Panc1 (cell line): ENCODE measurements at regions of chr1 and their contacts with region 1.

Region 1: GRCh38 chr1:20212685-20213331 is 26.5 kb upstream of the PLA2G2C start:
- DNase-seq: no peak
- ATAC-seq: peak; percentile 91
- H3K4me3 ChIP-seq: peak overlapping the region in 1 of 2 experiments; percentile 29; a peak in 2 of 4 replicates
- H3K27ac ChIP-seq: no peak overlapping the region
- H3K4me1 ChIP-seq: peaks cover 6% of the 10 kb centered on the region; the same call in 1 of the 2 replicates
- H3K27me3 ChIP-seq: peaks cover 18% of the 10 kb centered on the region
- CTCF ChIP-seq: peak; percentile 94

Region 2: GRCh38 chr1:19918057-19918456 is 294.8 kb before region 1 on chr1:
- CTCF ChIA-PET with region 1: no interaction called
- POLR2A ChIA-PET with region 1: interaction called, 14 read pairs
- in situ Hi-C with region 1: no loop called
- intact Hi-C with region 1: no loop called
- DNase-seq: peak; percentile 64
- ATAC-seq: peak; percentile 84
- H3K4me3 ChIP-seq: no peak overlapping the region
- H3K27ac ChIP-seq: no peak overlapping the region
- H3K4me1 ChIP-seq: no peaks in the 10 kb centered on the region
- H3K27me3 ChIP-seq: no peaks in the 10 kb centered on the region
- CTCF ChIP-seq: peak; percentile 91

Region 3: GRCh38 chr1:19957779-19958178 is 255.0 kb before region 1 on chr1:
- CTCF ChIA-PET with region 1: interaction called, 10 read pairs
- POLR2A ChIA-PET with region 1: no interaction called
- in situ Hi-C with region 1: no loop called
- intact Hi-C with region 1: no loop called
- DNase-seq: no peak
- ATAC-seq: no peak
- H3K4me3 ChIP-seq: no peak overlapping the region
- H3K27ac ChIP-seq: no peak overlapping the region
- H3K4me1 ChIP-seq: no peaks in the 10 kb centered on the region
- H3K27me3 ChIP-seq: peaks cover 4% of the 10 kb centered on the region
- CTCF ChIP-seq: no peak; the same call in 1 of the 2 replicates

Region 4: GRCh38 chr1:20227704-20228103 is 14.9 kb after region 1 on chr1:
- CTCF ChIA-PET with region 1: interaction called, 15 read pairs
- POLR2A ChIA-PET with region 1: interaction called, 3 read pairs
- in situ Hi-C with region 1: no loop called
- intact Hi-C with region 1: no loop called
- DNase-seq: no peak
- ATAC-seq: no peak
- H3K4me3 ChIP-seq: no peak overlapping the region
- H3K27ac ChIP-seq: no peak overlapping the region
- H3K4me1 ChIP-seq: no peaks in the 10 kb centered on the region
- H3K27me3 ChIP-seq: peaks cover 31% of the 10 kb centered on the region
- CTCF ChIP-seq: no peak

Region 5: GRCh38 chr1:20318971-20319370 is 106.2 kb after region 1 on chr1:
- CTCF ChIA-PET with region 1: no interaction called
- POLR2A ChIA-PET with region 1: no interaction called
- in situ Hi-C with region 1: no loop called
- intact Hi-C with region 1: no loop called
- DNase-seq: no peak
- ATAC-seq: no peak
- H3K4me3 ChIP-seq: no peak overlapping the region
- H3K27ac ChIP-seq: no peak overlapping the region
- H3K4me1 ChIP-seq: no peaks in the 10 kb centered on the region
- H3K27me3 ChIP-seq: peaks cover 8% of the 10 kb centered on the region
- CTCF ChIP-seq: no peak

Region 6: GRCh38 chr1:20376880-20377494 is 164.2 kb after region 1 on chr1:
- CTCF ChIA-PET with region 1: no interaction called
- POLR2A ChIA-PET with region 1: no interaction called
- in situ Hi-C with region 1: no loop called
- intact Hi-C with region 1: loop called (anchors 10 kb)
- DNase-seq: peak; percentile 28
- ATAC-seq: peak; percentile 90
- H3K4me3 ChIP-seq: no peak overlapping the region
- H3K27ac ChIP-seq: no peak overlapping the region
- H3K4me1 ChIP-seq: no peaks in the 10 kb centered on the region
- H3K27me3 ChIP-seq: peaks cover 3% of the 10 kb centered on the region
- CTCF ChIP-seq: peak; percentile 92

Region 7: DNA sequence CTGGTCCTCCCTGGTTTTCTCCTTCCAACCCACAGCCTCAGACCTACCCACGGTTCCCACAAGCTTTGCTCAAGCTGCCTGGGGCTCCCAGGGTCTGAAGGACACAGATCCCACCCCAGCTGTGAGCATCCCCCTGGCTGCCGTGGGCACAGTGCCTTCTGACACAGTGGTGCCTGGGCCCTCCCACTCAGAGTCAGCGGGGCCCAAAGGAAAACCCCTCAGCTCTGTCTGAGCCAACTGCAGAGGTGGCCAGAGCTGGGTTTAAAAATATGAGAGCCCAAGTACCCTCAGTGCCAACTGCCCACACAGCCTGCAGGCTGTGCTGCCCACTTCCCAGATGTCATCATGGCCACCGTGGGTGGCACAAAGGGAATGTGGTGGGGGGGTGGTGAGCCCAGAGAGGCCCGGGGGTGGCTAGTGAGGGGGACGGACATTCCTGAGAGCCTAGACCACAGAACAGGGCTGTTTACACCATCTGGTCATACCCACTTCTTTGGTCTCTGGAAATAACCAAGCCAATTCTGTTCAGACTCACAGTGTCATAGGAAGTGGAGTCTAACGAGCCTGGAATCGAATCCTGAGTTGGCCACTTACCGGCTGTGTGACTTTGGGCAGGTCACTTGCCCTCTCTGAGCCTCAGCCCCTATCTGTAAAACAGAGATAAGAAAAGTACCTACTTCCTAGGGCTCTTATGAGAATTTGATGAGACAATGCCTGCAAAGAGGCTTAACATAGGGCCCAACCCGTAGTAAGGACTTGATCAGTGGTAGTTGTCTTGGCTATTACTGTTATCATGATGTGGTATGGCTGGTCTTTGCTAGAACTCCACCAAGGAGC is 187.8 kb after region 1 on chr1:
- CTCF ChIA-PET with region 1: no interaction called
- POLR2A ChIA-PET with region 1: no interaction called
- in situ Hi-C with region 1: no loop called
- intact Hi-C with region 1: no loop called
- DNase-seq: no peak
- ATAC-seq: no peak
- H3K4me3 ChIP-seq: no peak overlapping the region
- H3K27ac ChIP-seq: no peak overlapping the region
- H3K4me1 ChIP-seq: no peaks in the 10 kb centered on the region
- H3K27me3 ChIP-seq: peaks cover 8% of the 10 kb centered on the region
- CTCF ChIP-seq: no peak

Region 8: GRCh38 chr1:20472121-20472520 is 259.3 kb after region 1 on chr1:
- CTCF ChIA-PET with region 1: interaction called, 23 read pairs
- POLR2A ChIA-PET with region 1: no interaction called
- in situ Hi-C with region 1: no loop called
- intact Hi-C with region 1: no loop called
- DNase-seq: no peak
- ATAC-seq: no peak
- H3K4me3 ChIP-seq: no peak overlapping the region
- H3K27ac ChIP-seq: no peak overlapping the region
- H3K4me1 ChIP-seq: peaks cover 15% of the 10 kb centered on the region
- H3K27me3 ChIP-seq: peaks cover 2% of the 10 kb centered on the region; the same call in 1 of the 2 replicates
- CTCF ChIP-seq: no peak

Region 9: DNA sequence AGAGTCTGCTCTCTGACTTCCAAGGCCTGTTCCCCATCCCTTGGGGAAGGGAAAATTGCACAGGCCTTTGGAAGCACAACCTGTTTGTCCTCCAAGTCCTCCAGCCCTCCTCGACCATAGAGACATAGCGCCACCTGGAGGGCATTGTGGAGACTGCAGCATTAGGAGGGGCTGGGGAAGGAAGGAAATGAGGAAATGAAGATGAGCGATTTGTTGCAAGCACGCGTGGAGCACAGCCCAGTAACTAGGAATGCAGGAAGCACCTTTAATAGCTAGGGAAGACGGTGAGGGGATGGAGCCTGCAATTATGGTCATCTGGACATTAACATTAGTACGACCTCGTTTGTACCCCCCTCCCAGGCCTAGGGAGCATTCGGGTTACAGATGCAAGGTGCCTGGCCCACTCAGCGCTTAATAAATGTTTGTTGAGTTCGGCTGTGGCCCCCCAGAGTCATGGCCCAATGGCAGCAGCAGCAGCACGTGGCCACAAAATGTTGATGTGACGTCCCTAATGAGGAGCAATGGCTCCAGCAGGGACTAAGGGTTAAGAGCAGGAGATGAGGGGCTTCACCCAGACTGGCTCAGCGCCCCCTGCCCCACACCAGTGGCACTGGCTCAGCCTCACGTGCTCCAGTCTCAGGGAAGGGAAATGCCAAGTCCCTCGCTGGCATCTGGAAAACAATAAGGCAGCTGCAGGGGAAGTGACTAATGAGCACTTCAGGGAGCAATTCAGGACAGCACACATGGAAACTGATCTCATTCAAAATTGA is 281.2 kb after region 1 on chr1:
- CTCF ChIA-PET with region 1: interaction called, 5 read pairs
- POLR2A ChIA-PET with region 1: no interaction called
- in situ Hi-C with region 1: no loop called
- intact Hi-C with region 1: loop called (anchors 2 kb)
- DNase-seq: peak; percentile 90
- ATAC-seq: peak; percentile 72
- H3K4me3 ChIP-seq: no peak overlapping the region
- H3K27ac ChIP-seq: no peak overlapping the region
- H3K4me1 ChIP-seq: no peaks in the 10 kb centered on the region
- H3K27me3 ChIP-seq: no peaks in the 10 kb centered on the region
- CTCF ChIP-seq: peak; percentile 94

Region 10: DNA sequence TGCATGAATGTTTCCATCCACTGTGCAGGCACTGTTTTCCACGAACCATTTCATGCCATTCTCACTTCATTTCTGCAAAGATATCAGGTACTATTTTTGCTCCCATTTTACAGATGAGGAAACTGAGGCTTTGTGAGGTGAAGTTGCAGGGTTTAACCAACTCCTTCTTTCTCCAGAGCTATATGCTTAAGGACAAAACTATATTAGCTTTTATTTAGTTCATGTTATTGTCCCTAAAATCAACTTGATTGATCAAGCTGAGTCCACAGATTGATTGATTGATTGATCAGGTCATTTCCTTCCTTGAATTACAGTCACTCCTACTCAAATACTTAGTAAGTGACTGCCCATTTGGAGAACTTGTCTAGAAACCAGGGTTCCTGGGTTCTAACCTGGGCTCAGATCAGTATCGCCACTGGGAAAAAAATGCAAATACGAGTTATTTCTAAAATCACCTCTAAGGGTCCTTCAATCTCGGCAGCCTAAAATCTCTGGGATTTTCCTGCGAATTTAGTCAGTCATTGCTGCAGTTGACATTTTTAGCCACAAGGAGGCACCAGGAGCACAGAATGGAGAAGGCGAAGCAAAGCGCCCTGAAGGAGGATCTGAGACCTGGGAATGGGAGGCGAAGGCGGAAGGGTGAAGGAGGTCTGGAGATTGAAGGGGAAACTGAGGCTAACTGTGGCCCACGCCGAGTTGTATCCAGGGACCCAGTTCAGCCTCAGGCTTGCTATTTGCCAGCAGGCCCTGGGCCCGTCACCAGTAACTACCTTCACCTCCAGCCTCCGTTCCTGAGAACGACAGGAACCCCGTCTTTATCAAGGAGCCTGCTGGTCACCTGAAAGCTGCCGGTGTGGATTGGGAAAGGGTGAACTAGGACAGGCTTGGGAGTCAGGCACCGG is 309.4 kb after region 1 on chr1:
- CTCF ChIA-PET with region 1: no interaction called
- POLR2A ChIA-PET with region 1: no interaction called
- in situ Hi-C with region 1: no loop called
- intact Hi-C with region 1: no loop called
- DNase-seq: peak; percentile 74
- ATAC-seq: peak; percentile 91
- H3K4me3 ChIP-seq: no peak overlapping the region
- H3K27ac ChIP-seq: no peak overlapping the region
- H3K4me1 ChIP-seq: no peaks in the 10 kb centered on the region
- H3K27me3 ChIP-seq: peaks cover 3% of the 10 kb centered on the region; the same call in 1 of the 2 replicates
- CTCF ChIP-seq: peak; percentile 96

Region 11: DNA sequence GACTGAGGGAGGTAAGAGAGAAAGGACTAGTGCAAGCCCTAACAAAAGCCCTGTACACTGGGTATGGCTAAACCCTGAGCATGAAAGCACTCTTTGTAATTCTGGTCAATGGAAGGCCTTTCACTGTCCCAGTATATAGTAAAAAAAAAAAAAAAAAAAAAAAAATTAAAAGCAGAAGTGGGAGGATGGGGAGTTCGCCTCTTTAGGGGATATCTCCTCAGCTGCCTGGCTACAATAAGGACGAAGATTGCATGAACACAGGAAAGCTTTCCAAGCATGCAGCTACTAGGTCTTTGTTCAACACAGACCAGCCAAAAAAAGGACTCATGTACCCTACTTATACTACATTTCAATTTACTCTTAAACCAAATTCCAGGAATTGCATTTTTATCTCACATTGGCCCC is 904.8 kb after region 1 on chr1:
- CTCF ChIA-PET with region 1: no interaction called
- POLR2A ChIA-PET with region 1: no interaction called
- in situ Hi-C with region 1: no loop called
- intact Hi-C with region 1: no loop called
- DNase-seq: no peak
- ATAC-seq: no peak
- H3K4me3 ChIP-seq: no peak overlapping the region
- H3K27ac ChIP-seq: no peak overlapping the region
- H3K4me1 ChIP-seq: no peaks in the 10 kb centered on the region
- H3K27me3 ChIP-seq: no peaks in the 10 kb centered on the region
- CTCF ChIP-seq: no peak